K562 (cell line): ENCODE measurements at regions of chr6 and their contacts with region 1.

Region 1: DNA sequence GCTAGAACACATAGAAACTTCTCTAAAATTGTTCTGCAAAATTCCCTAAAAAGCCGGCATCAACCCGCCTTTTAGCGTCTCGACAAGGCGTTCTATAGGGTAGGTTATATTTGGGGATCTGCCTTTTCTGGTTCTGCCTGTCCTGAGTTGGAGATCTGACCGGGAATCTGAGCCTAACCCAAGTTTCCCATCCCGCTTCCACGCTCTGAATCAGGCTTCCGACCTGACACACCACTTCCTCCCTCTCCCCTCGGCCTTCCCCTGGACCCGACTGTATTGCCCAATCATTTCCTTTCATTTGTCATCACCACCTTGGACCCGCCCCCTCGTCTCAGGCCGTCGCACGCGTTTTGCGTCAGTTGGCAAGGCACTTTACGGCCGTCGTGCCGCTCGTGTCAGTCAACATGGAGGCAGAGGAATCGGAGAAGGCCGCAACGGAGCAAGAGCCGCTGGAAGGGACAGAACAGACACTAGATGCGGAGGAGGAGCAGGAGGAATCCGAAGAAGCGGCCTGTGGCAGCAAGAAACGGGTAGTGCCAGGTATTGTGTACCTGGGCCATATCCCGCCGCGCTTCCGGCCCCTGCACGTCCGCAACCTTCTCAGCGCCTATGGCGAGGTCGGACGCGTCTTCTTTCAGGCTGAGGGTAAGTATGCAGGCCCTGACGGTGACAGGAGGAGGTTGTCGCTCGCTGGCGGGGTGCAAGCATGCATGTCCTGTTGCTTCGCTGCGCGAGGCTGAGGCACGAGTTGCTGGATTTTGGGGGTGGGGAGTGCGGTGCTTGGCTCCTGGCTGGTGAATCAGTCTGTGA is at the start of gene ABT1:
- DNase-seq: peak; percentile 95 to 100 (median 97)
- ATAC-seq: peak; percentile 83
- H3K4me3 ChIP-seq: peak within 1 kb of the TSS; percentile 91
- H3K27ac ChIP-seq: peak within 1 kb of the TSS; percentile 88
- H3K4me1 ChIP-seq: peaks cover 16 to 19% of the 10 kb centered on the region in 2 experiments; a peak in 4 of 5 replicates
- H3K27me3 ChIP-seq: no peaks in the 10 kb centered on the region
- CTCF ChIP-seq: no peak; a peak in 1 of 6 replicates
- EP300 ChIP-seq: peak; percentile 82
- POLR2A ChIP-seq: peak; percentile 97
- RAD21 ChIP-seq: 0 out of 4 replicates have a peak, but pooled peaks of 1 of the 2 experiments have one; percentile 4
- polyA plus RNA-seq, gene ABT1: 8.8 to 25.2 TPM

Region 2: DNA sequence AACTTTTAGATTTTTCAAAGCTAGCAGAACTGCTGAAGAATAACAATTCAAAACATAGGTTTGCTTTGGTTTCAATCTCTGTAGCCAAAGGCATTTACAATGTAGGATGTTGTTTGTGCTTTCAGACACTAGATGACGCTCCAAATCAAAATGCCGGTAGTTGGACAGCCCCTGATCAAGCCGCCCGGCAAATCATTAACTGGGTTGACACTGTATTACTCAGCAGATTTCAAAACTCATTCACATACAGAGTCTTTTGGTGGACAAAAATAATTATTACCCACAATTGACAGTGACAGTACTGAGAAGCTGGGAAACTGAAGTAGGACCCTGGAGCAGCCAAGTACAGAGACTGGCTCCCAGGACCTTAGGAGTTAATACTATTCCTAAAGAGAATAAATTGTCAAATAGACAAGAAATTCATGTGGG is 530.8 kb before region 1 on chr6:
- CTCF ChIA-PET with region 1: interaction called, 3 read pairs
- POLR2A ChIA-PET with region 1: interaction called, 3 read pairs
- in situ Hi-C with region 1: loop called (anchors 10 kb)
- intact Hi-C with region 1: loop called (anchors 5 kb)
- DNase-seq: peak; percentile 80 to 91 (median 84)
- ATAC-seq: peak; percentile 91
- H3K4me3 ChIP-seq: no peak overlapping the region
- H3K27ac ChIP-seq: peak overlapping the region; percentile 70
- H3K4me1 ChIP-seq: peaks cover under 1 to 6% of the 10 kb centered on the region in 2 experiments; a peak in 2 of 5 replicates
- H3K27me3 ChIP-seq: no peaks in the 10 kb centered on the region
- CTCF ChIP-seq: peak; percentile 89 to 98 (median 93)
- EP300 ChIP-seq: peak; percentile 32; the same call in 1 of the 2 replicates
- POLR2A ChIP-seq: no peak
- RAD21 ChIP-seq: peak; percentile 99

Region 3: GRCh38 chr6:26183581-26184366 is 413.0 kb before region 1 on chr6:
- CTCF ChIA-PET with region 1: interaction called, 3 read pairs
- POLR2A ChIA-PET with region 1: interaction called, 13 read pairs
- in situ Hi-C with region 1: no loop called
- intact Hi-C with region 1: no loop called
- DNase-seq: no peak
- ATAC-seq: no peak
- H3K4me3 ChIP-seq: no peak overlapping the region
- H3K27ac ChIP-seq: no peak overlapping the region
- H3K4me1 ChIP-seq: peaks cover 0 to 18% of the 10 kb centered on the region in 2 experiments; a peak in 4 of 5 replicates
- H3K27me3 ChIP-seq: no peaks in the 10 kb centered on the region
- CTCF ChIP-seq: no peak
- EP300 ChIP-seq: no peak
- POLR2A ChIP-seq: no peak
- RAD21 ChIP-seq: no peak

Region 4: GRCh38 chr6:26520853-26521599 is 75.8 kb before region 1 on chr6:
- CTCF ChIA-PET with region 1: interaction called, 5 read pairs
- POLR2A ChIA-PET with region 1: no interaction called
- in situ Hi-C with region 1: no loop called
- intact Hi-C with region 1: loop called (anchors 2 kb)
- DNase-seq: peak; percentile 94 to 98 (median 98)
- ATAC-seq: peak; percentile 78
- H3K4me3 ChIP-seq: peak overlapping the region; percentile 70
- H3K27ac ChIP-seq: peak overlapping the region; percentile 98
- H3K4me1 ChIP-seq: peaks cover 13 to 28% of the 10 kb centered on the region in 2 experiments; a peak in 4 of 5 replicates
- H3K27me3 ChIP-seq: no peaks in the 10 kb centered on the region
- CTCF ChIP-seq: peak in 1 of 3 experiments; percentile 8; a peak in 2 of 6 replicates
- EP300 ChIP-seq: peak; percentile 68
- POLR2A ChIP-seq: no peak
- RAD21 ChIP-seq: no peak

Region 5: DNA sequence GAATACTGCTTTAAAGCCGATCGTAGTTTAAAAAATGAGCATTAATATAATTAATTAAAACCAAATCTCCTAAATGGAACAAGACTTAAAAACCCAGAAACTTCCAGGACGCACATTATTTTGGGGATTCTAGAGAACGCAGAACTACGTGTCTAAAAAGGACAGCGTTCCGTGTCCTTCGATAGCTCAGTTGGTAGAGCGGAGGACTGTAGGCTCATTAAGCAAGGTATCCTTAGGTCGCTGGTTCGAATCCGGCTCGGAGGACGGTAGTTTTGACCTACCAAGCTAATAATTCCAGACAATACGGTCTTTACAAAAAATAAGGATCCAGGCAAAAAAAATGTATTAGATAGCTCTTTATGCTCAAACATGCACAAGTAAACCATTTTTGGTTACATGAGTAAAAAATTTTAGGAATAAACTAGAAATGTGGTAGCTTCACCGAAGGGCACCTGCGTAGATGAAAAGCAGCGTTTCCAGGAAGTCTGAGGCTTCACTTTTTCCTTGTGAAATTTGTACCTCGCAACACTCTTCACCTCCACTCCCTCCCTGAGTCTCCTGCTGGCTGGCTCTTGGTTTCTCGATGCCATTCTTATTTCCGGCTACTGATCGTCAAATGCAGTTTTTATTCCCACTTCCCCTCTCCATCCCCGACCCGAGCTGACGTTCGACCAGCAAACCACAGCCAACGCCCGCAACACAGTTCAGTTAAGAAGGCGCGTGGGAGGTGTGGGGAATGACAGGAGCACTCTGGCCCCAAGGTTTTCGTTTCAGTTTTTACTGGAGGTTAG is 19.7 kb before region 1 on chr6:
- CTCF ChIA-PET with region 1: interaction called, 8 read pairs
- POLR2A ChIA-PET with region 1: interaction called, 141 read pairs
- in situ Hi-C with region 1: no loop called
- intact Hi-C with region 1: loop called (anchors 1 kb)
- DNase-seq: peak; percentile 60 to 96 (median 68)
- ATAC-seq: peak; percentile 77
- H3K4me3 ChIP-seq: peak overlapping the region; percentile 34
- H3K27ac ChIP-seq: peak overlapping the region; percentile 63
- H3K4me1 ChIP-seq: peaks cover 9 to 23% of the 10 kb centered on the region in 2 experiments; a peak in 4 of 5 replicates
- H3K27me3 ChIP-seq: no peaks in the 10 kb centered on the region
- CTCF ChIP-seq: no peak
- EP300 ChIP-seq: peak; percentile 52; the same call in 1 of the 2 replicates
- POLR2A ChIP-seq: no peak
- RAD21 ChIP-seq: 0 out of 4 replicates have a peak, but pooled peaks of 1 of the 2 experiments have one; percentile 10

Region 6: DNA sequence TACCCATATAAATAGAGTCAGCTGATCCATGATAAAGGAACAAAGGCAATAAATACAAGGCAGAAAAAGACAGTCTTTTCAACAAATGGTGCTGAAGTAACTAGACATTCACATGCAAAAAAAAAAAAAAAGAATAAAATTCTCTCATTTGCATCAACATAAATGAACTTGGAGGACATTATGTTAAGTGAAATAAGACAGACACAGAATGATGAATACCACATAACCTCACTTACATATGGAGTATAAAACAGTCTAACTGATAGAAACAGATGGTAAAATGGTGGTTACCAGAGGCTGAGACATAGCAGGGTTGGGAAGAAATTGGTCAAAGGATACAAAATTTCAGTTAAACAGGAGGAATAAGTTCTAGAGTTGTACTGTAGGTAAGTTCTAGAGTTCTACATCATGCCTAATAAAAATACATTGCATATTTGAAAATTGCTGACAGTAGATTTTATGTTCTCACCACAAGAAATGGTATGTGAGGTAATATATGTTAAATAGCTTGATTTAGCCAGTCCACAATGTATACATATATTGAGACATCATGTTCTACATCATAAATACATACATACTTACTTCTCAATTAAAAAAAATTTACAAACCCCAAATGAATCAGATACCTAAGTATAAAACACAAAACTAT is 54.5 kb after region 1 on chr6:
- CTCF ChIA-PET with region 1: no interaction called
- POLR2A ChIA-PET with region 1: no interaction called
- in situ Hi-C with region 1: no loop called
- intact Hi-C with region 1: no loop called
- DNase-seq: no peak
- ATAC-seq: no peak
- H3K4me3 ChIP-seq: no peak overlapping the region
- H3K27ac ChIP-seq: no peak overlapping the region
- H3K4me1 ChIP-seq: no peaks in the 10 kb centered on the region
- H3K27me3 ChIP-seq: no peaks in the 10 kb centered on the region
- CTCF ChIP-seq: no peak
- EP300 ChIP-seq: no peak
- POLR2A ChIP-seq: no peak
- RAD21 ChIP-seq: no peak